K562 (cell line): ENCODE measurements at regions of chr13 and their contacts with region 1.

Region 1: GRCh38 chr13:90591927-90592268 is 755.6 kb upstream of the MIR17HG start:
- DNase-seq: peak in 1 of 4 experiments; percentile 23
- ATAC-seq: peak; percentile 50
- H3K4me3 ChIP-seq: no peak overlapping the region
- H3K27ac ChIP-seq: no peak overlapping the region
- H3K4me1 ChIP-seq: no peaks in the 10 kb centered on the region
- H3K27me3 ChIP-seq: no peaks in the 10 kb centered on the region
- CTCF ChIP-seq: no peak
- EP300 ChIP-seq: no peak
- POLR2A ChIP-seq: no peak
- RAD21 ChIP-seq: no peak

Region 2: DNA sequence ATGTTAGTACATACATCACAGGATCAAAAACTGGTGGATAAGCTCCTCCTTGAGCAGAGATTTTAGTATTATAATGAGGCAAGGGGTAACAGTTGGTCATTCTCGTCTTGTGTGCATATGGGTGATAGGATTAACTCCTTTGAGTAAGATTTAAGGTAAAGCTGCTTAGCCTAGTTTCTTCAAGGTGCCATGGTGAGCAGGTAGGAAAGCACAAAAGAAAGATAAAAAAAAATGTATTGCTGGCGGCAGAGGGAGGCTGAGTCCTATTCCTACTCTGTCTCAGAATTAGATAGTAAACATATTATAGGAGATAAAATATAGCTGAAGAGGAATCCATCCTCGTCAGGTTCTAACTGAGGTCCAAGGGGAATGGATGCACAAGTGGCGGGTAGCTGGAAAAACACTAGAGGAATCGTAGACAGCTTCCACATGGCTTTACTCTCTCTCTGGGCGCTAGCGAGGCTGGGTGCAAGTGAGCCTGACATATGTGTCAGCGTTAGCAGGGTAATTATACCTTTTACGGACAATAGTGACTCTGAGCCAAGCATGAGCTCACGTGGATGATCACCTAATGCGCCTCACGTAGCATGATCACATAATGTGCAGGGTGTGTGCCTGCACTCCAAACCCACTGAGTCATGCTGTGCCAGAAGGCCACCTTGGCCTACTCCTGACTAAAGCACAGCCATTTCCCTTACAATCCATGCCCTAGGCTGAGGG is 21.3 kb after region 1 on chr13:
- CTCF ChIA-PET with region 1: no interaction called
- POLR2A ChIA-PET with region 1: no interaction called
- in situ Hi-C with region 1: no loop called
- intact Hi-C with region 1: loop called (anchors 2 kb)
- DNase-seq: no peak
- ATAC-seq: no peak
- H3K4me3 ChIP-seq: no peak overlapping the region
- H3K27ac ChIP-seq: no peak overlapping the region
- H3K4me1 ChIP-seq: no peaks in the 10 kb centered on the region
- H3K27me3 ChIP-seq: no peaks in the 10 kb centered on the region
- CTCF ChIP-seq: no peak
- EP300 ChIP-seq: no peak
- POLR2A ChIP-seq: no peak
- RAD21 ChIP-seq: no peak